Activated CD8-positive, alpha-beta T cell treated with anti-CD3 and anti-CD28 coated beads, Interleukin-2, amount 10 ng/mL, durations not matched to agents 7 days and 5 days (primary cell): ENCODE measurements at regions of chr13 and their contacts with region 1.

Region 1: GRCh38 chr13:99436686-99437416 is 64.4 kb upstream of the TM9SF2 start:
- DNase-seq: peak; percentile 98
- ATAC-seq: peak; percentile 70
- H3K4me3 Mint-ChIP-seq: peak overlapping the region; percentile 25
- H3K27ac Mint-ChIP-seq: peak overlapping the region; percentile 58
- H3K4me1 Mint-ChIP-seq: peaks cover 61% of the 10 kb centered on the region
- H3K27me3 Mint-ChIP-seq: peaks cover 22% of the 10 kb centered on the region

Region 2: GRCh38 chr13:99275093-99275469 is 161.8 kb before region 1 on chr13:
- CTCF ChIA-PET with region 1: interaction called, 346 read pairs
- POLR2A ChIA-PET with region 1: interaction called, 8 read pairs
- DNase-seq: peak; percentile 69
- ATAC-seq: peak; percentile 84
- H3K4me3 Mint-ChIP-seq: peak overlapping the region; percentile 13
- H3K27ac Mint-ChIP-seq: peak overlapping the region; percentile 80
- H3K4me1 Mint-ChIP-seq: peaks cover 93% of the 10 kb centered on the region
- H3K27me3 Mint-ChIP-seq: no peaks in the 10 kb centered on the region

Region 3: GRCh38 chr13:99322297-99323103 is 114.4 kb before region 1 on chr13:
- CTCF ChIA-PET with region 1: interaction called, 14 read pairs
- POLR2A ChIA-PET with region 1: no interaction called
- DNase-seq: peak; percentile 40
- ATAC-seq: peak; percentile 79
- H3K4me3 Mint-ChIP-seq: peak overlapping the region; percentile 51
- H3K27ac Mint-ChIP-seq: peak overlapping the region; percentile 89
- H3K4me1 Mint-ChIP-seq: peaks cover 61% of the 10 kb centered on the region
- H3K27me3 Mint-ChIP-seq: no peaks in the 10 kb centered on the region

Region 4: GRCh38 chr13:99386911-99387788 is 49.7 kb before region 1 on chr13:
- CTCF ChIA-PET with region 1: interaction called, 329 read pairs
- POLR2A ChIA-PET with region 1: interaction called, 5 read pairs
- DNase-seq: peak; percentile 88
- ATAC-seq: peak; percentile 26
- H3K4me3 Mint-ChIP-seq: no peak overlapping the region
- H3K27ac Mint-ChIP-seq: peak overlapping the region; percentile 58
- H3K4me1 Mint-ChIP-seq: peaks cover 64% of the 10 kb centered on the region
- H3K27me3 Mint-ChIP-seq: no peaks in the 10 kb centered on the region

Region 5: DNA sequence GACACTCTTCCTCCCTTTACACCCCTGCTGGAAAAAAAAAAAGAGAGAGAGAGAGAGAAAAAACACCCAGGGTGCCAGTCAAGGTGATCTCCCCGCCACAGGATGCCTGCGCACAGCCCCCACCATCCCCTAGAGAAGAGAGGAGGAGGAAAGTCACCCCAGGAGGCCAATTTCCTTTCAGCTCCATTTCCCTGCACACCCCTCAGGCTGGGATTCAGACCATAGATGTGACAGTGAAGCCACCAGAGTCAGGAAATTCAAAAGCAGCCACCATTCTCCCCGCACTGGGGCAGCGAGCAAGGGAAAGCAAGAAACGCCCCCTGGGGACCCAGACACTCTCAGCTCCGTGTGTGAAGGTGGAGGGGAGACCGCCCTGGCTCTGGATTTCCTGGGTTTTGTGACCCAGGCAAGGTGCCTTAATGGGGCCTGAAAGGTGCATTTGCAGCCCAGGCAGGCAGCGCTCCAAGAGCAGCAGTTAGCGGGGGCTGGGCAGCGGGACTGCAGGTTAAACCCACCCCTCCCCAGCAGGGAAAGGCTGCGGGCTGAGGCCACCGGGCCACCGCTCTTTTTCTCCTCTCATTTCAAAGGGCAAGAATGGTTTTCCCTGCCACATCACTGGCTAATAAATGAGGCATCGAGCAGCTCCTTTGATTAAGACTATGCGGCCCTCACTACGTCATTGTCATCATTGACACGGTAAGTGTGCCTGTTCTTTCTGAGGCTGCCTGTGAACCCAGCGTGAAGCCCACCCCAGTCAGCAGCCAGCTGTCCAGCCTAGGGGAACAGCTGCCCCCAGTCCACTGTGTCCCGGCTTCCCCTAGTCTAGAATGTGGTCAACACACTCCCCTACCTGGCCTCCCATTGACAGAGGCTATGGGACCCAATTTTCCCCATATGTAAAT is 19.4 kb before region 1 on chr13:
- CTCF ChIA-PET with region 1: interaction called, 170 read pairs
- POLR2A ChIA-PET with region 1: interaction called, 5 read pairs
- DNase-seq: no peak
- ATAC-seq: no peak
- H3K4me3 Mint-ChIP-seq: peak overlapping the region; percentile 35
- H3K27ac Mint-ChIP-seq: peak overlapping the region; percentile 76
- H3K4me1 Mint-ChIP-seq: peaks cover 39% of the 10 kb centered on the region
- H3K27me3 Mint-ChIP-seq: no peaks in the 10 kb centered on the region